CD4-positive, alpha-beta memory T cell (primary cell): ENCODE measurements at regions of chr4 and their contacts with region 1.

Region 1: DNA sequence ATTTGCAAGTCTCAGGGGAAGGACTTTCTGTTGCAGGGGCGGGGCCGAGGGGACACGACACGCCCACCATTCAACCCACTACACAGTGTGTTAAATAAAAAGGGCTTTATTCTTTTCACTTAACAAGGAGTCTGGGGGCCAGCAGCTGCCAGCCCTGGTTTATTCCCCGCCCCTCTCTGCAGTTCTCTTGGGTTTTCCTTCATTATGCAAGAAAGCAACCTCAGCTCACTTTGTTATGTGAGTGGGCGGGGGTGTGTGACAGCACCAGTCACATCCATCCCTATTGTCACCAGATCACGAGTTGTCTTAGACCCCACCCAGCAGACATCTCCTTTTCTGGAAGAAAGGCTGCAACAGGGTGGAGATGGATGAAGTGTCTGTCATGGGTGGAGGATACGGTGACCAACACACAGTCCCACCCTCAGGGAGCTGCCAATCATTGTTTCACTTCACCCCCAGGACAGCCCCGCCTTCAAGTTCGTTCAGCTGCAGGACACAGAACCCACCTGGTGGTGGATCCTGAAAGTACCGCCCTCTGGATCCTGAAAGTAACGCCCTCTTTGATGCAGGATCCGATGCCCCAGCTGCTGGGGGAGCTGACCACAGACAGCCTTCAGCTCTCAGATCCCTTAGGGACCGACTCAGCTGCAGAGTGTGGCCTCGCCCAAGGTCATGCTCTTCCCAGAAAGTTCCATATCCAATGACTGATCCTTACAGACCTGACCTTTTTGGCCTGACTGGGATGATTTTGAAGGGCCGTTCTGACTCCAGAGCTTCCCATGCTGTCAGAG is 79.6 kb downstream of the SMIM20 start:
- DNase-seq: no peak
- H3K4me3 ChIP-seq: no peak overlapping the region
- H3K4me3 Mint-ChIP-seq: no peak overlapping the region
- H3K27ac ChIP-seq: no peak overlapping the region
- H3K27ac Mint-ChIP-seq: no peak overlapping the region
- H3K4me1 ChIP-seq: no peaks in the 10 kb centered on the region
- H3K4me1 Mint-ChIP-seq: peaks cover 1 to 8% (median 3%) of the 10 kb centered on the region in 4 donors
- H3K27me3 ChIP-seq: no peaks in the 10 kb centered on the region
- H3K27me3 Mint-ChIP-seq: no peaks in the 10 kb centered on the region

Region 2: GRCh38 chr4:25842229-25842845 is 151.3 kb before region 1 on chr4:
- CTCF ChIA-PET with region 1: interaction called, 27 read pairs
- POLR2A ChIA-PET with region 1: no interaction called
- intact Hi-C with region 1: loop called (anchors 1 kb)
- DNase-seq: peak in 3 of 5 donors; percentile 36 to 41 (median 41)
- H3K4me3 ChIP-seq: no peak overlapping the region
- H3K4me3 Mint-ChIP-seq: peak overlapping the region in 4 of 8 donors; percentile 18 to 63 (median 30)
- H3K27ac ChIP-seq: no peak overlapping the region
- H3K27ac Mint-ChIP-seq: peak overlapping the region in 6 of 7 donors; percentile 13 to 84 (median 48)
- H3K4me1 ChIP-seq: peaks cover 28% of the 10 kb centered on the region
- H3K4me1 Mint-ChIP-seq: peaks cover 33 to 74% (median 46%) of the 10 kb centered on the region in 4 donors
- H3K27me3 ChIP-seq: no peaks in the 10 kb centered on the region
- H3K27me3 Mint-ChIP-seq: no peaks in the 10 kb centered on the region

Region 3: GRCh38 chr4:25981749-25982148 is 11.8 kb before region 1 on chr4:
- CTCF ChIA-PET with region 1: interaction called, 38 read pairs
- POLR2A ChIA-PET with region 1: no interaction called
- intact Hi-C with region 1: no loop called
- DNase-seq: no peak
- H3K4me3 ChIP-seq: no peak overlapping the region
- H3K4me3 Mint-ChIP-seq: no peak overlapping the region
- H3K27ac ChIP-seq: no peak overlapping the region
- H3K27ac Mint-ChIP-seq: no peak overlapping the region
- H3K4me1 ChIP-seq: no peaks in the 10 kb centered on the region
- H3K4me1 Mint-ChIP-seq: no peaks in the 10 kb centered on the region
- H3K27me3 ChIP-seq: no peaks in the 10 kb centered on the region
- H3K27me3 Mint-ChIP-seq: peaks cover 0 to 3% of the 10 kb centered on the region in 2 donors

Region 4: GRCh38 chr4:26402458-26402857 is 408.9 kb after region 1 on chr4:
- CTCF ChIA-PET with region 1: interaction called, 57 read pairs
- POLR2A ChIA-PET with region 1: no interaction called
- intact Hi-C with region 1: no loop called
- DNase-seq: no peak
- H3K4me3 ChIP-seq: no peak overlapping the region
- H3K4me3 Mint-ChIP-seq: no peak overlapping the region
- H3K27ac ChIP-seq: no peak overlapping the region
- H3K27ac Mint-ChIP-seq: peak overlapping the region in 4 of 7 donors; percentile 2 to 54 (median 23)
- H3K4me1 ChIP-seq: peaks cover 11% of the 10 kb centered on the region
- H3K4me1 Mint-ChIP-seq: peaks cover 14 to 29% (median 19%) of the 10 kb centered on the region in 4 donors
- H3K27me3 ChIP-seq: no peaks in the 10 kb centered on the region
- H3K27me3 Mint-ChIP-seq: no peaks in the 10 kb centered on the region

Region 5: GRCh38 chr4:26719954-26720552 is 726.5 kb after region 1 on chr4:
- CTCF ChIA-PET with region 1: no interaction called
- POLR2A ChIA-PET with region 1: no interaction called
- intact Hi-C with region 1: loop called (anchors 1 kb)
- DNase-seq: no peak
- H3K4me3 ChIP-seq: no peak overlapping the region
- H3K4me3 Mint-ChIP-seq: no peak overlapping the region
- H3K27ac ChIP-seq: no peak overlapping the region
- H3K27ac Mint-ChIP-seq: no peak overlapping the region
- H3K4me1 ChIP-seq: no peaks in the 10 kb centered on the region
- H3K4me1 Mint-ChIP-seq: peaks cover 0 to 5% (median 3%) of the 10 kb centered on the region in 4 donors
- H3K27me3 ChIP-seq: no peaks in the 10 kb centered on the region
- H3K27me3 Mint-ChIP-seq: no peaks in the 10 kb centered on the region